ENCODE measurements at regions of chr3 and their contacts with region 1.

Region 1: DNA sequence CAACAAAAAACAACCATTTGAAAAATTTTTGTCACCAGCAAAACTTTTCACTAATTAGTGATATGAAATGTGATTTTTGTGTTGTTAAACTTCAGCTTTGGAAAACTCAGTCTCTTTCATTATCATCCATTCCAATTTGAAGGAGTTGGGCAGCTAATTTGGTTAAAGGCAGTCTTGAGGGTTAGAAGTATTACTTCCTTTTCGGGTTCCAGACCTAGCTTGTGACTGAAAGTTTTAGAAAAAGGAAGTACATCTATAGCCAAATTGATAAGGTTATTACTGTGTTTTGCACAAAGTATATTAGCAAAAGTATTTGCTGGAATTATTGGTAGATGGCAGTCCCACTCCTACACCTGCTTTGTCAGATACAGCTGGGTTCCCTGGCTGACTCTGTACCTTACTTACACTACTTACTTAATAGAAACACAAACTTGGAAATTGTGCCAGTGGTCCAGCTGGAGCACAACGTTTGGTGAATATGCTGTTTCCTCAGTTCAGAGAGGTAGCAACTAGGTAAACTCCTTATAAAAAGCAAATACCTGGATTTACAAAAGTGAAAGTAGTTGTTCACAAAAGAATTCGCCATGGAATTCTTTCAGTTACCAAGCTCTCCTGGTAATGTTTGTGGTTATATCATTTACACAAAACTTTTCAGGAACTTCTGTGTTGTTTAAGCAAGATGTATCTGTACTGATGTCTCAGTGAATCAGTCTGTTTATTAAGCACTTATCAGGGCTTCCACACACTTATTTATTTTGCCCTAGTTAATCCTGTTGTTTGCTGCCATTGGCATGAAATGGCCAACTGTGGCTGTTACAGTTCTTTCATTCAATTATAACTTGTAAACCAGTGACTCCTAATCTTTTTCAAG is 31.6 kb downstream of the TIPARP start:
- DNase-seq: no peak
- ATAC-seq: no peak
- H3K4me3 ChIP-seq: no peak overlapping the region
- H3K4me3 Mint-ChIP-seq: no peak overlapping the region
- H3K27ac ChIP-seq: no peak overlapping the region
- H3K27ac Mint-ChIP-seq: no peak overlapping the region
- H3K4me1 ChIP-seq: no peaks in the 10 kb centered on the region
- H3K4me1 Mint-ChIP-seq: peaks cover 5% of the 10 kb centered on the region
- H3K27me3 ChIP-seq: no peaks in the 10 kb centered on the region
- H3K27me3 Mint-ChIP-seq: no peaks in the 10 kb centered on the region
- CTCF ChIP-seq: no peak

Region 2: DNA sequence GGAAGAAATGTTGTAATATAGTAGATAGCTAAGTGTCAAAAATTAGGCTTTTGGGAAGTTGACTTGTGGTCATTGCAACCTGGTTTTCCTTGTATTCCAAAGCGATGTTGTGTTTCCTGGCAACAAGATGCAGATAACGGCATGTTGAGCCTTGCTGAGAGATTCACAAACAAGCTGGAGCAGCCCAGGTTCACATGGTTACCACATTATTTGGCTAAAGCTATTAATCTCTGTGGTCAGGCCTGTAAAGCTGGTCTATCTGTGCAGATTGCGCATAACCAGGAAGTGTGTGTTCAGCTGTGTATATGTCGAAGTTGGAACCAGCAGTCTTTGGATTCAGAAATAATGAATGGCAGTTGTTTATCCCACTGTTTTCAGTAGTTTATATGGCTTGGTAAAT is 25.0 kb before region 1 on chr3:
- CTCF ChIA-PET with region 1: interaction called, 3 read pairs
- POLR2A ChIA-PET with region 1: no interaction called
- intact Hi-C with region 1: loop called in 1 of 2 experiments (anchors 2 kb)
- DNase-seq: peak in 2 of 9 experiments; percentile 36 to 55
- ATAC-seq: no peak
- H3K4me3 ChIP-seq: no peak overlapping the region
- H3K4me3 Mint-ChIP-seq: peak overlapping the region; percentile 49
- H3K27ac ChIP-seq: no peak overlapping the region
- H3K27ac Mint-ChIP-seq: no peak overlapping the region
- H3K4me1 ChIP-seq: peaks cover 71% of the 10 kb centered on the region
- H3K4me1 Mint-ChIP-seq: peaks cover 90% of the 10 kb centered on the region
- H3K27me3 ChIP-seq: no peaks in the 10 kb centered on the region
- H3K27me3 Mint-ChIP-seq: no peaks in the 10 kb centered on the region
- CTCF ChIP-seq: no peak

Region 3: GRCh38 chr3:156691920-156692319 is 14.1 kb before region 1 on chr3:
- CTCF ChIA-PET with region 1: no interaction called
- POLR2A ChIA-PET with region 1: no interaction called
- intact Hi-C with region 1: loop called in 1 of 2 experiments (anchors 2 kb)
- DNase-seq: no peak
- ATAC-seq: no peak
- H3K4me3 ChIP-seq: no peak overlapping the region
- H3K4me3 Mint-ChIP-seq: no peak overlapping the region
- H3K27ac ChIP-seq: no peak overlapping the region
- H3K27ac Mint-ChIP-seq: no peak overlapping the region
- H3K4me1 ChIP-seq: no peaks in the 10 kb centered on the region
- H3K4me1 Mint-ChIP-seq: peaks cover 52% of the 10 kb centered on the region
- H3K27me3 ChIP-seq: no peaks in the 10 kb centered on the region
- H3K27me3 Mint-ChIP-seq: no peaks in the 10 kb centered on the region
- CTCF ChIP-seq: no peak

Region 4: GRCh38 chr3:156826144-156826895 is 120.3 kb after region 1 on chr3 and contains the start of gene LEKR1:
- CTCF ChIA-PET with region 1: no interaction called
- POLR2A ChIA-PET with region 1: no interaction called
- intact Hi-C with region 1: loop called in 1 of 2 experiments (anchors 10 kb)
- DNase-seq: peak; percentile 28 to 92 (median 67)
- ATAC-seq: peak; percentile 54
- H3K4me3 ChIP-seq: peak within 1 kb of the TSS; percentile 71 to 81
- H3K4me3 Mint-ChIP-seq: peak within 1 kb of the TSS; percentile 89
- H3K27ac ChIP-seq: peak within 1 kb of the TSS; percentile 73 to 92
- H3K27ac Mint-ChIP-seq: peak within 1 kb of the TSS; percentile 95
- H3K4me1 ChIP-seq: peaks cover 9% of the 10 kb centered on the region
- H3K4me1 Mint-ChIP-seq: peaks cover 13% of the 10 kb centered on the region
- H3K27me3 ChIP-seq: no peaks in the 10 kb centered on the region
- H3K27me3 Mint-ChIP-seq: no peaks in the 10 kb centered on the region
- CTCF ChIP-seq: no peak
- total RNA-seq, gene LEKR1: 1.5 to 1.8 TPM